Panc1 (cell line): ENCODE measurements at regions of chr11 and their contacts with region 1.

Region 1: GRCh38 chr11:119218141-119218878 is 12.2 kb downstream of the CBL start:
- DNase-seq: peak; percentile 94
- ATAC-seq: peak; percentile 96
- H3K4me3 ChIP-seq: peak overlapping the region in 1 of 2 experiments; percentile 18; a peak in 1 of 4 replicates
- H3K27ac ChIP-seq: peak overlapping the region; percentile 78
- H3K4me1 ChIP-seq: peaks cover 28% of the 10 kb centered on the region
- H3K27me3 ChIP-seq: no peaks in the 10 kb centered on the region
- CTCF ChIP-seq: no peak

Region 2: DNA sequence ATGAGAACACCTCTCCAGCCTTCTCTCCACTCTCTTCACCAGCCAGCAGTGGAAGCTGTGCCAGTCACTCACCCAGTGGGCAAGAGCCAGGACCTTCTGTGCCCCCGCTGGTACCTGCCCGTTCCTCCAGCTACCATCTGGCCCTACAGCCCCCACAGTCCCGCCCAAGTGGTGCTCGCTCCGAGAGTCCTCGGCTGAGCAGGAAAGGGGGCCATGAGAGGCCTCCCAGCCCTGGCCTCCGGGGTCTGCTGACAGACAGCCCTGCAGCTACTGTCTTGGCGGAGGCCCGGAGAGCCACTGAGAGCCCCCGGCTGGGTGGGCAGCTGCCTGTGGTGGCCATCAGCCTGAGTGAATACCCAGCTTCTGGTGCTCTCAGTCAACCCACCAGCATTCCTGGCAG is 590.7 kb before region 1 on chr11:
- CTCF ChIA-PET with region 1: no interaction called
- POLR2A ChIA-PET with region 1: interaction called, 15 read pairs
- in situ Hi-C with region 1: no loop called
- intact Hi-C with region 1: no loop called
- DNase-seq: no peak
- ATAC-seq: no peak
- H3K4me3 ChIP-seq: no peak overlapping the region
- H3K27ac ChIP-seq: no peak overlapping the region
- H3K4me1 ChIP-seq: peaks cover 9% of the 10 kb centered on the region
- H3K27me3 ChIP-seq: no peaks in the 10 kb centered on the region
- CTCF ChIP-seq: no peak

Region 3: DNA sequence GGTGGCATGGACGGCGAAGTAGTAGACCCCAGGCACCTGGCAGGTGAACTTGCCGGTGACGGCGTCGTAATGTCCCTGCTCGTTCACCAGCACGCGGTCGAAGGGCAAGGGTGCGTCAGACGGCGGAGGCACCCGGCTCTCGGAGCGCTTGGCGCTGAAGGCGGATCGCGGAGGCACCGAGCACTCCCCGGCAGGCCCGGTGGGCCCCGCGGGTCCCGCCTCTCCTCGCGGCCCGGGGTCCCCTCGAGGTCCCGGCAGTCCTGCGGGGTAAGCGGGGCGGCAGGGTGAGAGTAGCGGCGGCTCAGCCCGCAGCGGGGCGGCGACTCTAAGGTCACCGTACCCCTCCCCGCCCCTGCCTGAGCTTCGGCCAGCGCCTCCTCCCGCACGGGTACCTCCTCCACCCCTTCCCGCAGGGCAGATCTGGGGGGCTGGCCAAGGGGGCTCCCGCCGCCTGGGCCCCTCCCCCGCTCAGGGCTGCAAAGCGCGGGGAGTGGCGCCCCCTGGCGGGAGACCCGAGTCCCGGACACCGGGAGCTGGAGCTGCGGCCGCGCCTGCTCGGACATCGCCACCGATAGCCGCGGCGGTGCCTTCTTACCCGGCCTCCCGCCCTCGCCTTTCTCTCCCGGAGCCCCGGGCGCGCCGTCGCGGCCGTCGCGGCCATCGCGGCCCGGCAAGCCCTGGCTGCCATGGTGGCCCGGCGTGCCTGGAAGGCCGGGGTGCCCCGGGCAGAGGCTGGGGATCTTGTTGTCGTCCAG is 121.5 kb after region 1 on chr11:
- CTCF ChIA-PET with region 1: interaction called, 11 read pairs
- POLR2A ChIA-PET with region 1: no interaction called
- in situ Hi-C with region 1: no loop called
- intact Hi-C with region 1: no loop called
- DNase-seq: no peak
- ATAC-seq: peak; percentile 62
- H3K4me3 ChIP-seq: peak overlapping the region; percentile 36 to 48
- H3K27ac ChIP-seq: peak overlapping the region; percentile 24; the same call in 1 of the 2 replicates
- H3K4me1 ChIP-seq: peaks cover 39% of the 10 kb centered on the region
- H3K27me3 ChIP-seq: no peaks in the 10 kb centered on the region
- CTCF ChIP-seq: peak; percentile 100